ENCODE measurements at regions of chr12 and their contacts with region 1.

Region 1: GRCh38 chr12:68040450-68041075 is 51.3 kb downstream of the IFNG-AS1 start:
- DNase-seq: peak; percentile 42 to 61
- H3K4me3 ChIP-seq: no peak overlapping the region
- H3K27ac ChIP-seq: no peak overlapping the region
- H3K4me1 ChIP-seq: no peaks in the 10 kb centered on the region
- H3K27me3 ChIP-seq: no peaks in the 10 kb centered on the region
- CTCF ChIP-seq: peak; percentile 92

Region 2: DNA sequence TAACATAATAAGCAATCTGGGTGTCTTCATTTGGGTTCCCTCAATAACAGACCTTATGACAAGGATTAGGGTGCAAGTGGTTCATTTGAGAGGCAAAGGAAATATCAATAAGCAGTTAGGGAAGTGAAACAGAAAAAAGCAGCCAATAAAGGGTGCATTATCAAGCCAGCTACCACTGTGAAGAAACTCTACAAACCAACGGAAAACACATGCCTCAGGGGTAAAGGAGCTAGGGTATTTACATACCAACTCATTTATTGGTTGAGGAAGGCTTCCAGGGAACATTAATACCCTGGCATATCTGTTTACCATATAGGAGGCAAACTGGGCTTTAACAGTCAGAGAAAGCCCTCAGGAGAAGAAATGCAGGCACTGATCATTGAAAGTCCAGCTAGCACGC is 74.0 kb before region 1 on chr12:
- CTCF ChIA-PET with region 1: no interaction called
- POLR2A ChIA-PET with region 1: no interaction called
- intact Hi-C with region 1: no loop called
- DNase-seq: no peak
- H3K4me3 ChIP-seq: no peak overlapping the region
- H3K27ac ChIP-seq: no peak overlapping the region
- H3K4me1 ChIP-seq: no peaks in the 10 kb centered on the region
- H3K27me3 ChIP-seq: no peaks in the 10 kb centered on the region
- CTCF ChIP-seq: no peak

Region 3: DNA sequence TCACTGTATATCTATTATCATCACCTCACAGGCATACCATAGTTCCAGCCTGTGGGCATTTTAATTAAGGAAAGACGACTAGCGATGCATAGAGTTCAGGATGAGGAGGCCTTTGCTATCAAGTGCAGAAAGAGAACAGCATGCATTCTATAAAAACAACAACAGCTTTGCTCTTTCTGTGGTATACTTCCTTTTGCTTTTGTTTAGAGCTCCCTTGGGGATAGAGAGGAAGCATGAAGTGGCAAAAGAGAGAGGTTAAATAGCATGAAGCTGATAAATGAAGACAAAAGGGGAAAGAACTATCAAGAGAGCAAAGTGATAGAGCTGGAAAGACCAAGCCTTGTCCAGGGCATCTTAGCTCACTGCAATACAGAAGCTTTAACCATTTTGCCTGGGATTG is 27.9 kb before region 1 on chr12:
- CTCF ChIA-PET with region 1: no interaction called
- POLR2A ChIA-PET with region 1: no interaction called
- intact Hi-C with region 1: no loop called
- DNase-seq: no peak
- H3K4me3 ChIP-seq: no peak overlapping the region
- H3K27ac ChIP-seq: no peak overlapping the region
- H3K4me1 ChIP-seq: no peaks in the 10 kb centered on the region
- H3K27me3 ChIP-seq: no peaks in the 10 kb centered on the region
- CTCF ChIP-seq: no peak

Region 4: GRCh38 chr12:68113644-68114043 is 73.1 kb after region 1 on chr12:
- CTCF ChIA-PET with region 1: no interaction called
- POLR2A ChIA-PET with region 1: no interaction called
- intact Hi-C with region 1: no loop called
- DNase-seq: no peak
- H3K4me3 ChIP-seq: no peak overlapping the region
- H3K27ac ChIP-seq: no peak overlapping the region
- H3K4me1 ChIP-seq: no peaks in the 10 kb centered on the region
- H3K27me3 ChIP-seq: no peaks in the 10 kb centered on the region
- CTCF ChIP-seq: peak; percentile 49; the same call in 1 of the 2 replicates

Region 5: DNA sequence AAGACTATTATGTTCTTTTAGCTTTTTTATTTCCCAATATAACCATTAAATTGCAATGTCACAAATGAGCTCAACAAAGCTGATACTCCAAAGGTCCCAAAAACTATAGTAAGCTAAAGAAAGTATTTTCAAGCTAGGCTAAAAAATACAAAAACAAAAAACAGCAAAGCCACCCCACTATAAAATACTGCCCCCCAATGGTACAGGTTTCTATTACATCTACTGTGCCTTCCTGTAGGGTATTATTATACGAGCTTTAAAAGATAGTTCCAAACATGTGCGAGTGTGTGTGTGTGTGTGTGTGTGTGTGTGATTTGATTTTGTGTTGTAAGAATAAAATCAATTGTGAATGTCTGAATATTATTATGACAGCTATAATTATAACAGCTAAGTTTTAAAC is 117.9 kb after region 1 on chr12:
- CTCF ChIA-PET with region 1: interaction called, 3 read pairs
- POLR2A ChIA-PET with region 1: no interaction called
- intact Hi-C with region 1: loop called (anchors 1 kb)
- DNase-seq: no peak
- H3K4me3 ChIP-seq: no peak overlapping the region
- H3K27ac ChIP-seq: no peak overlapping the region
- H3K4me1 ChIP-seq: no peaks in the 10 kb centered on the region
- H3K27me3 ChIP-seq: no peaks in the 10 kb centered on the region
- CTCF ChIP-seq: peak; percentile 68

Region 6: DNA sequence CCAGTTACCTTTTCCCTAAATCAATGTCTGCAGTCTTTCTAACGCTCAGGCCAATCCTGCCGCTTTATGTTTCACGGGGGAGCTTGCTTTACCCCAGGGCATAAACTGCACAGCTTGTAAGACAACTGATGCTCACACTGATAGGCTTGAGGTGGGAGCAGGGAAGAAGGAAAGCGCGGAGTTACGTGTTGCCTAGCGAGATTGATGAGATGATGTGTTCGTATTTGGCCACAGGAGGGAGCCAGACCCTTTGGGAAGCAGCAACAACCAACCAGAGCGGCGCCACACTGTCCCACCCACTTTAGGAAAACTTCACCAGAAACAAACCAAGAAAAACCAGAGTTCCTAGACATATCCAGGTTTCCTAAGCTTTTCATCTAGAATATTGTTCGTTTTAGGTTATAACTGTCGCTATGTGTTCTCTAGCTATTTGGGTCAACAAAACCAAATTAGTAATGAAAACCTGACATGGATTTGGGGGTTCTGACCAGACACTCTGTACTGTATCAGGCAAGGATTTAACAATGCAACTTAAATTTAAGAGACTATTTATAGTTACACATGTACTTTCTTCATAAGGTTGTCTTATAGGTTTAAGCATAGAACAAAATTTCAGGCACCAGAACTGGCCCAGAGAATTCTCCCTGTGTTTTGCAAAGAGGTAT is 182.7 kb after region 1 on chr12:
- CTCF ChIA-PET with region 1: interaction called, 5 read pairs
- POLR2A ChIA-PET with region 1: no interaction called
- intact Hi-C with region 1: loop called (anchors 2 kb)
- DNase-seq: peak; percentile 62 to 70
- H3K4me3 ChIP-seq: no peak overlapping the region
- H3K27ac ChIP-seq: no peak overlapping the region
- H3K4me1 ChIP-seq: 0 out of 2 replicates have a peak, but pooled peaks cover 11% of the 10 kb centered on the region
- H3K27me3 ChIP-seq: no peaks in the 10 kb centered on the region
- CTCF ChIP-seq: peak; percentile 89

Region 7: DNA sequence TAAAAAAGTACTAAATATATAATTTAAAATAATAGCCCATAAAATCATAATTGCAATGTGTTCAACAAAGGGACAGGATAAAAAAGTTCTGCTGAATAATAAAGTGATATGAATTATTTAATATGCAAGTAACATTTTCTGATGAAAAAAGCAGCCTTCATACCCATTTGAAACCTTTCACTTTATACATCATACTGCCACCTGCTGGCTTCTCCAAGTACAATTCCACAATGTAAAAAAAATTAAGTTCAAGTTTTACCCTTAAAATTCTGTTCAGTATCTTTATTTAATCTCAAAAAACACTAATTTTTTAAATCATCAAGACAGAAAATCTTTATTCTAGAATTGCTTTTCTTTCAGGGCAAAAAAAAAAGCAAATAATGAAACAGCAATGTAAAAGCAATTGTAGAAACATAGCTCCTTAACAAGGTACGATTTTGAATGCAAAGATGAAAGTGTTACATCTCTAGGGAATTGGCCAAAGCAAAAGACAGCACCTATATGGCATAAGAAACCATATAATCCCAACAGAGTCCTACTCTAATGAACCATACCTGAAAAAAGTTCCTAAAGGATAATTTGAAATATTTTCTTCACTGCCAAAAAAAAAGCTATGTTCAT is 276.6 kb after region 1 on chr12:
- CTCF ChIA-PET with region 1: interaction called, 5 read pairs
- POLR2A ChIA-PET with region 1: no interaction called
- intact Hi-C with region 1: loop called (anchors 1 kb)
- DNase-seq: peak in 1 of 2 experiments; percentile 2
- H3K4me3 ChIP-seq: no peak overlapping the region
- H3K27ac ChIP-seq: no peak overlapping the region
- H3K4me1 ChIP-seq: no peaks in the 10 kb centered on the region
- H3K27me3 ChIP-seq: no peaks in the 10 kb centered on the region
- CTCF ChIP-seq: peak; percentile 79

Region 8: DNA sequence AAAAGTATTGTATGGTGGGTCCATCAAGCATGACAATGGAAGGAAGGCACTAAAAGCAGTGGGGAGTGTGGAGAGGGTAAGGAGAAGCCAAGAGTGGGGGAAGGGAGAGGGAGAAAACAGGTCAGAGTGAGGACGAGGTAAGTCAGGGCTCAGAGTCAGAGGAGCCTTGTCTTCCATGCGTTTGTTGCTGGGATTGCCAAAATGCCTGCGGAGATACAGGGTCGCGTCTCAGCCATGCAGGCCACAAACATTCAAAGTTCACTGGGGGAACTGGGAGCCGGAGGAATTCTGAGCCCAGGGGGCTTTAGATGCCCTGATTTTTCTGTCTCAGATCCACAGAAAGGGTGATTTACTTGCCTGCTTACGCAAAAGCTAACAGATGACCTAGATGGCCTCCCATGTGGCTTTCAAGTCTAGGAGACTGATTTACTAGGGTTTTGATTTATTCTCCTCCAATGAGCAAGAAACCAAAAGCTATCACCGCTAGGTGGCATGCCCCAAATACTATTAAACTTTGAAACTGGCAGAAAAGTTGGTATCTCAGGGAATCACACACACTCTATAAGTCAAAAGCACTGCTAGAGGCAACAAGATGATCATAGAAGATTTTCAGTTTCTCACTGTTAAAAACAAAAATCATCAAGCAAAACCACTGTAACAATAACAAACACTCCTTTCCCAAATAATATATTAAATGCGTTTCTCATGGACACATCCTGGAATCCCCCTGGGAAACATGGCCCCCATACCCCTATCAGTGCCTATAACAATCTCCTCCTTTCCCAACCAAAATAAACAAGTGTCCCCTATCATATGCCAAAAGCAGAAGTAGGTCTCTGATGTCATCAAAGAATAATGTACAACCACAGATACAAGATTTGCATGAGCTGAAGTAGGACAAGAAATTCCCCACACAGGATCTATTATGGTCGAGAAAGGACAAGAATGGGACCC is 318.2 kb after region 1 on chr12:
- CTCF ChIA-PET with region 1: interaction called, 5 read pairs
- POLR2A ChIA-PET with region 1: no interaction called
- intact Hi-C with region 1: loop called (anchors 1 kb)
- DNase-seq: peak; percentile 48 to 61
- H3K4me3 ChIP-seq: no peak overlapping the region
- H3K27ac ChIP-seq: no peak overlapping the region
- H3K4me1 ChIP-seq: peaks cover under 1% of the 10 kb centered on the region
- H3K27me3 ChIP-seq: no peaks in the 10 kb centered on the region
- CTCF ChIP-seq: peak; percentile 78

Region 9: GRCh38 chr12:68627419-68628319 is 587.1 kb after region 1 on chr12:
- CTCF ChIA-PET with region 1: no interaction called
- POLR2A ChIA-PET with region 1: interaction called, 18 read pairs
- intact Hi-C with region 1: no loop called
- DNase-seq: no peak
- H3K4me3 ChIP-seq: no peak overlapping the region
- H3K27ac ChIP-seq: no peak overlapping the region
- H3K4me1 ChIP-seq: 0 out of 2 replicates have a peak, but pooled peaks cover 7% of the 10 kb centered on the region
- H3K27me3 ChIP-seq: no peaks in the 10 kb centered on the region
- CTCF ChIP-seq: no peak

Measured in PC-9 (cell line).